Activated CD8-positive, alpha-beta T cell treated with anti-CD3 and anti-CD28 coated beads for 36 hours (primary cell): ENCODE measurements at regions of chr19 and their contacts with region 1.

Region 1: GRCh38 chr19:7772752-7773291 is 9.8 kb downstream of the CLEC4M start:
- DNase-seq: peak; percentile 70
- ATAC-seq: peak; percentile 96
- H3K4me3 Mint-ChIP-seq: peak overlapping the region; percentile 21
- H3K27ac Mint-ChIP-seq: peak overlapping the region; percentile 73
- H3K4me1 Mint-ChIP-seq: peaks cover 24% of the 10 kb centered on the region
- H3K27me3 Mint-ChIP-seq: peaks cover 13% of the 10 kb centered on the region
- CTCF ChIP-seq: no peak

Region 2: DNA sequence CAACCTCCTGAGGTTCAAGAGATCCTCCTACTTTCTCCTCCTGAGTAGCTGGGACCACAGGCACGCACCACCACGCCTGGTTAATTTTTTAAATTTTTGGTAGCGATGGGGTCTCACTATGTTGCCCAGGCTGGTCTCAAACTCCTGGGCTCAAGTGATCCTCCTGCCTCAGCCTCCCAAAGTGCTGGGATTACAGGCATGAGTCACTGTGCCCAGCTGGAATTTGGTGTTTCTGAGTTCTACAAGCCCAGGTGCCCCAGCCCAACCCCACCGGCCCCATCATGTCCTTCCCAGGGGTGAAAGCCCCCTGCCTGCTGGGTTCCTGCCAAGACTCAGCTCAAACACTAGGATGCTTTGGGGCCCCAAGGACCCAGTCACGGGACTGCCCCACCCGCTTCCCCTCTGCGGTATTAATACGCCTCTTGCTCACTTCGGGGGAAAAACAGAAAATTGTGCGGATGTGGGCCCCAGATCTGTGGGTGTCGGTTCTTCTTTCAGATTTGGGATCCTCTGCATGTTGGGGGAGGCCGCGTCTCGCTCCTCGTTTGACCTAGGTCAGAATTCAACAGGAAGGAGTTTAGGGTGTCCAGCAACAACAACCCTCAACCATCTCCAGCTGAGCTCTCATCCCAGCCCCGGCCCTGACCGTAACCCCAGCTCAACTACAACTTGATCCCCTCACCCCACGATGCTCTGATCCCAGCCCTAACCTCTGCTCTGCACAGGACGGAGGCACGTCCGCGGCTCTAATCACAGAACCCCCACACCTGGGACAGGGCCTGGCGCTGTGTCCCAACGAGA is 67.2 kb before region 1 on chr19:
- CTCF ChIA-PET with region 1: no interaction called
- POLR2A ChIA-PET with region 1: interaction called, 3 read pairs
- intact Hi-C with region 1: loop called (anchors 10 kb)
- DNase-seq: peak; percentile 94
- ATAC-seq: peak; percentile 93
- H3K4me3 Mint-ChIP-seq: peak overlapping the region; percentile 57
- H3K27ac Mint-ChIP-seq: peak overlapping the region; percentile 87
- H3K4me1 Mint-ChIP-seq: peaks cover 39% of the 10 kb centered on the region
- H3K27me3 Mint-ChIP-seq: no peaks in the 10 kb centered on the region
- CTCF ChIP-seq: no peak

Region 3: DNA sequence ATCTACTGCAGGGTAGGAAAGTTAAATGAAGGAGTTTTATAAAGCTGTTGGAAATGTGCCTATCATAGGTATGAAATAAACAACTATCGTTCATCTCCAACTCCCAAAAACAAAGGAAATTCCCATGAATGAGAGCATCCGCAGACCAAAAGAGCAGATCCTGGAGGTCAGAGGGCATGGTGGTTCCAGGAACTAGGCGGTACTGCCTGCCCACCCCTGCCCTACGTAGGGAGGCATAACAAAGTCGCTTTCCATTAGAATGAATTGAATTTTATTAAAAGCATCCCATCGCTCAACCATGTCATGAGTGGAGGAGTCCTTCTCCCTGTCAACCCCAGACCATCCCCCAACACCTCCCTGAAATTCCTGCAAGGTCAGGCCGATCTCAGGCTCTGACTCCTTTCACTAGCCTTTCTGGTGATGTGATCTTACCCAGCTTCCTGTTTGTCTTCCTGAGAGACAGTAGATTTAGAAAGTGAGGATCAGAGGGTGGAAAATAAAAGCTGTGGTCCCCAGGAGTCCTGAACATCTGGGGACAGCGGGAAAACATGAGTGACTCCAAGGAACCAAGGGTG is 10.0 kb before region 1 on chr19 and contains the start of gene CLEC4M:
- CTCF ChIA-PET with region 1: no interaction called
- POLR2A ChIA-PET with region 1: no interaction called
- intact Hi-C with region 1: no loop called
- DNase-seq: no peak
- ATAC-seq: no peak
- H3K4me3 Mint-ChIP-seq: no peak within 1 kb of the TSS
- H3K27ac Mint-ChIP-seq: no peak within 1 kb of the TSS
- H3K4me1 Mint-ChIP-seq: no peaks in the 10 kb centered on the region
- H3K27me3 Mint-ChIP-seq: peaks cover 16% of the 10 kb centered on the region
- CTCF ChIP-seq: no peak
- total RNA-seq, gene CLEC4M: not detected